ENCODE measurements at regions of chr7 and their contacts with region 1.

Region 1: GRCh38 chr7:129367700-129368388 is 66.4 kb upstream of the STRIP2 start:
- DNase-seq: peak; percentile 57
- ATAC-seq: peak; percentile 85
- H3K4me3 ChIP-seq: peak overlapping the region; percentile 45
- H3K27ac ChIP-seq: peak overlapping the region; percentile 92
- H3K4me1 ChIP-seq: peaks cover 10% of the 10 kb centered on the region; the same call in 1 of the 2 replicates
- H3K27me3 ChIP-seq: no peaks in the 10 kb centered on the region
- CTCF ChIP-seq: peak; percentile 88 to 93 (median 88)
- EP300 ChIP-seq: 0 out of 4 replicates have a peak, but pooled peaks of 1 of the 2 experiments have one; percentile 28
- POLR2A ChIP-seq: peak; percentile 44; the same call in 1 of the 2 replicates
- RAD21 ChIP-seq: peak; percentile 85

Region 2: DNA sequence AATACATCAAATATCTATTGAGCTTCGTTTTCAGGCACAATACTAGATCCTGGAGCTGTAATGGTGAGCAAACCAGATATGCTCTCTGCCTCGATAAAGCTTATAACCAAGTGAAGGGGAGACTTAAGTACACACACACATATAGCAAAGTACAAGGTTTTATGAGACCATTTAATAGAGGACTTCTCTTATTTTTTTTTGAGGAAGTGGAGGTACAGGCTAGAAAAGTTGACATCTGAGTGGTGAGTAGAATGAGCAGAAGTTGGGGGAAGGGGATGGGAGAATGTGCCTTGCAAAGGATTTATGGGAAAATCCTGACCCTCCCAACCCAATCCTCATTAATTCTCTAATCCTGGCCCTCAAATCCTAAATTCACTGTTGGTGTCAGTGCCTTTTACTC is 568.4 kb before region 1 on chr7:
- CTCF ChIA-PET with region 1: no interaction called
- POLR2A ChIA-PET with region 1: no interaction called
- RAD21 ChIA-PET with region 1: no interaction called
- SMC1A ChIA-PET with region 1: no interaction called
- in situ Hi-C with region 1: no loop called
- intact Hi-C with region 1: no loop called
- DNase-seq: no peak
- ATAC-seq: no peak
- H3K4me3 ChIP-seq: no peak overlapping the region
- H3K27ac ChIP-seq: no peak overlapping the region
- H3K4me1 ChIP-seq: no peaks in the 10 kb centered on the region
- H3K27me3 ChIP-seq: no peaks in the 10 kb centered on the region
- CTCF ChIP-seq: no peak
- EP300 ChIP-seq: no peak
- POLR2A ChIP-seq: no peak
- RAD21 ChIP-seq: no peak

Region 3: DNA sequence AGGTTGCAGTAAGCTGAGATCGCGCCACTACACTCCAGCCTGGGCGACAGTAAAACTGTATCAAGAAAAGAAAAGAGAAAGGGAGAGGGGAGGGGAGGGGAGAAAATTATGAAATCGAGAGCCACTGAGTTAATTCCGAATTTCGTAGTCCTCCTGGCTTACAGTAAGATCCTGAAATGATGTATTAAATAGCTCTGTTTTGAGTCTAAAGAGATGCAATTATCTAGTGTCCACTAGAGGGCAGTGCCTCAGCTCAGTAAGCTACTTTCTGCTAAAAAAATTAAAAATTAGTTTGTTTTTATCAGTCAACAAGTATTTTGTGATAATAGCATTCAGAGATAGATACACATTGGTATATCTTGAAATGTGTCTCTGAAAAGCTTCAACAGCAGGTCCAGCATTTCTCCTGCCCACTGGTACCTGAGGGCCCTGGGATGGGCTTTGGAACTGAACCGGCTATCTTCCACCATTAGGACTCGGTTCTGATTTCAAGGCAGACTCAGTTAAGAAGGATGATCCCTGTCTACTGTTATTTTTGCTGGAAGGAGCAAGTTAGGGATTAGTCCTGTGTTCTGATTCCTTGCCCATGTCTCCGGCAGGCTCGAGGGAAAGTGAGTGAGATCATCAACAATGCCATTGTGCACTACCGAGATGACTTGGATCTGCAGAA is 203.8 kb before region 1 on chr7:
- CTCF ChIA-PET with region 1: interaction called, 10 read pairs
- POLR2A ChIA-PET with region 1: no interaction called
- RAD21 ChIA-PET with region 1: interaction called, 4 read pairs
- SMC1A ChIA-PET with region 1: interaction called, 3 read pairs
- in situ Hi-C with region 1: no loop called
- intact Hi-C with region 1: no loop called
- DNase-seq: no peak
- ATAC-seq: peak; percentile 40
- H3K4me3 ChIP-seq: no peak overlapping the region
- H3K27ac ChIP-seq: no peak overlapping the region
- H3K4me1 ChIP-seq: peaks cover 57% of the 10 kb centered on the region
- H3K27me3 ChIP-seq: no peaks in the 10 kb centered on the region
- CTCF ChIP-seq: peak; percentile 61 to 78 (median 64)
- EP300 ChIP-seq: no peak
- POLR2A ChIP-seq: no peak
- RAD21 ChIP-seq: peak; percentile 60; the same call in 1 of the 2 replicates

Region 4: GRCh38 chr7:129343099-129343700 is 24.6 kb before region 1 on chr7:
- CTCF ChIA-PET with region 1: interaction called, 561 read pairs
- POLR2A ChIA-PET with region 1: interaction called, 27 read pairs
- RAD21 ChIA-PET with region 1: interaction called, 333 read pairs
- SMC1A ChIA-PET with region 1: interaction called, 451 read pairs
- in situ Hi-C with region 1: no loop called
- intact Hi-C with region 1: loop called (anchors 1 kb)
- DNase-seq: no peak
- ATAC-seq: peak; percentile 84
- H3K4me3 ChIP-seq: no peak overlapping the region
- H3K27ac ChIP-seq: no peak overlapping the region
- H3K4me1 ChIP-seq: peaks cover 20% of the 10 kb centered on the region
- H3K27me3 ChIP-seq: no peaks in the 10 kb centered on the region
- CTCF ChIP-seq: peak; percentile 64 to 67 (median 65)
- EP300 ChIP-seq: no peak
- POLR2A ChIP-seq: no peak
- RAD21 ChIP-seq: peak; percentile 80

Region 5: DNA sequence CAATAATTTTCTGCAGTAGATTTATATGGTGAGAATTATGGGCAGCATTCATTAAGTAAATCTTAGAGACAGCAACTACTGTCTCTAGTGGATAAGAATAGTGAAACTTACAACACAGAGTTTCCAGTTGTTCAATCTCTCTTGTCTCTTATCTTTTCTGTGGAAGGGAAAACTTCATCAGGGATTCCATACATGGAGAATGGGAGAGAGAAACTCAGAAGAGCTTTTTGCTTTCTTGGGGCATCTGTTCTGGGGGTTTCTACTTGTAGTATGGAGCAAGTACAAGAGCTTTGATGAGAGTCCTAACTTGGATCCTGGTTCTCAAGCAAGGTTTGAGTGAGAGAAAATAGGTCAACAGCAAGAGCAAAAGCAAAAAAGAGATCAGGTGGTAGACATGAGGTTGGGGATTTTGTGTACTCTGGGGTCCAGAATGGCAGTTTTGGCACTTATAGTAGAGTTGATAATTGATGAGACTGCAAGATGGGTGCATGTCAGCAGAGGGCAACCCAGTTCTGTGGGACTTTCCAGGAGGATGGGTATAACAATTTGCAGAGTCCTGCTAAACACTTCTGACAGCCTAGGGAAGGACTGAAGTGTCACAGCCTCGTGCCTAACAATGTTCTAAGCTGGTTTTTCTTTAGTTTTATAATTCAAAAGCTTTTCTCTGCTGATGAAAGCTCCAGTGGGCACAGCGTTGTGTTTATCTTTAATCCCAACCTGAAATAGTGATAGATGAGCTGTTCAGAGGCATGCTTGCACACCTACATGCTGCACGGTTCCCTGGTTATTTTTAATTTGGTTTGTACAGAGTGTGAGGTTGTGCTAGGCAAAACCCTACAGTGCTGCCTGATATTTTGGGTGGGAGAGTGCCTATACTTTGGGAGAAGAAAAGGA is 34.4 kb after region 1 on chr7:
- CTCF ChIA-PET with region 1: interaction called, 36 read pairs
- POLR2A ChIA-PET with region 1: interaction called, 5 read pairs
- RAD21 ChIA-PET with region 1: interaction called, 37 read pairs
- SMC1A ChIA-PET with region 1: interaction called, 50 read pairs
- in situ Hi-C with region 1: no loop called
- intact Hi-C with region 1: no loop called
- DNase-seq: peak; percentile 43
- ATAC-seq: peak; percentile 93
- H3K4me3 ChIP-seq: no peak overlapping the region
- H3K27ac ChIP-seq: peak overlapping the region; percentile 18; the same call in 1 of the 2 replicates
- H3K4me1 ChIP-seq: no peaks in the 10 kb centered on the region
- H3K27me3 ChIP-seq: no peaks in the 10 kb centered on the region
- CTCF ChIP-seq: peak; percentile 34 to 64 (median 37); a peak in 4 of 6 replicates
- EP300 ChIP-seq: peak; percentile 29 to 59; a peak in 2 of 4 replicates
- POLR2A ChIP-seq: no peak
- RAD21 ChIP-seq: peak; percentile 46

Region 6: GRCh38 chr7:129468087-129468486 is 100.2 kb after region 1 on chr7:
- CTCF ChIA-PET with region 1: interaction called, 108 read pairs
- POLR2A ChIA-PET with region 1: interaction called, 14 read pairs
- RAD21 ChIA-PET with region 1: interaction called, 90 read pairs
- SMC1A ChIA-PET with region 1: interaction called, 165 read pairs
- in situ Hi-C with region 1: loop called (anchors 5 kb)
- intact Hi-C with region 1: loop called (anchors 2 kb)
- DNase-seq: no peak
- ATAC-seq: no peak
- H3K4me3 ChIP-seq: no peak overlapping the region
- H3K27ac ChIP-seq: no peak overlapping the region
- H3K4me1 ChIP-seq: no peaks in the 10 kb centered on the region
- H3K27me3 ChIP-seq: no peaks in the 10 kb centered on the region
- CTCF ChIP-seq: no peak
- EP300 ChIP-seq: no peak
- POLR2A ChIP-seq: no peak
- RAD21 ChIP-seq: no peak

Region 7: GRCh38 chr7:129644634-129645230 is 276.9 kb after region 1 on chr7:
- CTCF ChIA-PET with region 1: interaction called, 28 read pairs
- POLR2A ChIA-PET with region 1: no interaction called
- RAD21 ChIA-PET with region 1: interaction called, 9 read pairs
- SMC1A ChIA-PET with region 1: interaction called, 20 read pairs
- in situ Hi-C with region 1: no loop called
- intact Hi-C with region 1: loop called (anchors 5 kb)
- DNase-seq: no peak
- ATAC-seq: no peak
- H3K4me3 ChIP-seq: no peak overlapping the region
- H3K27ac ChIP-seq: no peak overlapping the region
- H3K4me1 ChIP-seq: peaks cover 5% of the 10 kb centered on the region; the same call in 1 of the 2 replicates
- H3K27me3 ChIP-seq: no peaks in the 10 kb centered on the region
- CTCF ChIP-seq: peak; percentile 7 to 42 (median 28); a peak in 3 of 6 replicates
- EP300 ChIP-seq: no peak
- POLR2A ChIP-seq: no peak
- RAD21 ChIP-seq: peak; percentile 49

Region 8: GRCh38 chr7:129719980-129720732 is 352.3 kb after region 1 on chr7:
- CTCF ChIA-PET with region 1: no interaction called
- POLR2A ChIA-PET with region 1: no interaction called
- RAD21 ChIA-PET with region 1: no interaction called
- SMC1A ChIA-PET with region 1: no interaction called
- in situ Hi-C with region 1: no loop called
- intact Hi-C with region 1: no loop called
- DNase-seq: no peak
- ATAC-seq: no peak
- H3K4me3 ChIP-seq: no peak overlapping the region
- H3K27ac ChIP-seq: no peak overlapping the region
- H3K4me1 ChIP-seq: no peaks in the 10 kb centered on the region
- H3K27me3 ChIP-seq: no peaks in the 10 kb centered on the region
- CTCF ChIP-seq: no peak
- EP300 ChIP-seq: no peak
- POLR2A ChIP-seq: no peak
- RAD21 ChIP-seq: no peak